ENCODE measurements at regions of chr9 and their contacts with region 1.

Region 1: DNA sequence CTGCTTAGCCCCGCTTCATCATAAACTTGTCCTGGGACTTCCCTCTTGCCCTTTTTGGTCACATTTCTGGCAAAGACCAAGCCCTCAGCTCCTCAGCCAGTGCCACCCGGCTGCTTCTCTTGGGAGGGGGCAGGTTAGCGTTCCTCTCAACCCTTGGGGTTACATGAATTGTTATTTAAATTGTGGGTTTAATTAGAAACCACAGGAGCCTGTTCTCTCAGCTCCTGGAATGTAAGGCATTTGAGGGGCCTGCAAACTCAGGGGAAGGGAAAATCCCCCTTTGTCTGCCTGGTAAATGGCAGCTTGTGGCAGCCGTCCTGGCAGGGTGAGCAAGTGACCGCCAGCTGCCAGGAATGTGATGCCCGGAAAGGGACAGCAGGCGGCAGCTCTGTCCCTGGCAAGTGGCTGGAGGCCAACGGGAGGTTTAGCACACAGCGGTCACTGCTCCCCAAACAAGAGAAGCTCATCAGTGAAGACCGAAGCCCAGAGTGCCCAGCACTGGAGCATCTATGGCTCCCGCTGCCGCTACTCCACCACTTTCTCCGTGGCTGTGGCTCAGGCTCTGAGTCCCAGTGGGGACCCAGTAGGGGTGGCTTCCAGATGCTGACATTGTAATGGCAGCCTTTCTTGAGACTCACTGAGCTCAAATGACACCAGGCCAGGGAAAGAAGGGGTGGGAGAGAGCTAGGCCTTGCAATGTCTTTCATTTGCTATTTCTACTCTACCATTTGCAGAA is 51.7 kb downstream of the SHB start:
- DNase-seq: no peak
- ATAC-seq: peak; percentile 68
- H3K4me3 ChIP-seq: 0 out of 4 replicates have a peak overlapping the region, but pooled peaks of 1 of the 2 experiments have one; percentile 6
- H3K27ac ChIP-seq: peak overlapping the region; percentile 92
- H3K4me1 ChIP-seq: peaks cover 73% of the 10 kb centered on the region
- H3K27me3 ChIP-seq: no peaks in the 10 kb centered on the region
- CTCF ChIP-seq: peak; percentile 74; the same call in 1 of the 2 replicates

Region 2: DNA sequence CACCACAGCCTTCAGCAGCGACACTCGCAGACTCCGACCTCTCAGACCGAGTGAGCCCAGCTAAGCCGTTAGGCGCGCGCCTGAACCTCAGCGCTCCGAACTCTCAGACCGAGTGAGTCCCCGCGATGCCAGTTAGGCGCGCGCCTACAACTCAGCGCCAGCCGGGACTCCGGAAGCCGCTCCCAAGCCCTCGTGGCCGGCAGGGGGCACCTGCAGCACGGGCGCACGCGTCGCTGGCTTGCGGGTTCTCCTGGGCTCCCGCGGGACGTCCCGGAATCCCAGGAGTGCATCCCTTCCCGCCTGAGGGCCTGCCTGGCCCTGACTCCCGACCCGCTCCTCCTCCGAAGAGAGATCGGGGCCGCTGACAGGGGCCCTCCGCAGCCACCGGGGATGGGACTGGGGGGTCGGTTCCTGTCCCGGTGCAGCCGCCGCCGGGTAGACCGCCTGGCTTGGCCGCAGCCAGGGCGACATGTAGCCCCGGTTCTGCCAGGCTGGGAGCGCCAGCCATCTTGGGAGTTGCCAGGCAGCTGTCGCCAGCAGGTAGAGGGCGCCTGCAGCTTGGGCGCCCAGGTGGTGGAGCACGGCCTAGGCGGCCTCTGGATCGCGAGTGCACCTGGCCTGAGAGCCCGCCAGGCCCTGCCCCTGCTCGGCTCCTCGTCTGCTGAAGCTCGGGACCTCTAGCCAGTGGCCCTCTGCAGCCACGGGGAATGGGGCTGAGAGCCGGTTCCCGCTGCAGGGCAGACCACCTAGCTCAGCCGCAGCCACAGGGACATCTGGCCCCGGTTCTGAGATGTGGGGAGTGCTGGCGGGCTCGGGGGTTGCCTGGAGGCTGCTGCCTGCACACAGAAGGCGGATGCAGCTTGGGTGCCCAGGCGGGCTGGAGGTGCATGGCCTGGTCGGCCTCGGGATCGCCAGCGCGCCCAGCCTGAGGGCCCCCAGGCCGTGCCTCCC is 603.4 kb after region 1 on chr9 and contains the start of gene ANKRD18A:
- CTCF ChIA-PET with region 1: no interaction called
- POLR2A ChIA-PET with region 1: interaction called, 12 read pairs
- in situ Hi-C with region 1: no loop called
- intact Hi-C with region 1: no loop called
- DNase-seq: peak; percentile 61
- ATAC-seq: peak; percentile 90
- H3K4me3 ChIP-seq: peak within 1 kb of the TSS; percentile 56 to 77
- H3K27ac ChIP-seq: peak within 1 kb of the TSS; percentile 75
- H3K4me1 ChIP-seq: no peaks in the 10 kb centered on the region; the same call in 1 of the 2 replicates
- H3K27me3 ChIP-seq: no peaks in the 10 kb centered on the region
- CTCF ChIP-seq: peak; percentile 89
- total RNA-seq, gene ANKRD18A: 9.6 TPM

Measured in Panc1 (cell line).